PC-9 (cell line): ENCODE measurements at regions of chr12 and their contacts with region 1.

Region 1: GRCh38 chr12:22670762-22671161 is 45.8 kb downstream of the ETNK1 start:
- DNase-seq: no peak
- H3K4me3 ChIP-seq: no peak overlapping the region
- H3K27ac ChIP-seq: no peak overlapping the region
- H3K4me1 ChIP-seq: no peaks in the 10 kb centered on the region
- H3K27me3 ChIP-seq: no peaks in the 10 kb centered on the region
- CTCF ChIP-seq: peak; percentile 52

Region 2: GRCh38 chr12:22190969-22191368 is 479.8 kb before region 1 on chr12:
- CTCF ChIA-PET with region 1: no interaction called
- POLR2A ChIA-PET with region 1: interaction called, 10 read pairs
- intact Hi-C with region 1: no loop called
- DNase-seq: no peak
- H3K4me3 ChIP-seq: no peak overlapping the region
- H3K27ac ChIP-seq: no peak overlapping the region
- H3K4me1 ChIP-seq: no peaks in the 10 kb centered on the region
- H3K27me3 ChIP-seq: no peaks in the 10 kb centered on the region
- CTCF ChIP-seq: no peak

Region 3: GRCh38 chr12:22518067-22518719 is 152.6 kb before region 1 on chr12:
- CTCF ChIA-PET with region 1: no interaction called
- POLR2A ChIA-PET with region 1: no interaction called
- intact Hi-C with region 1: loop called (anchors 10 kb)
- DNase-seq: no peak
- H3K4me3 ChIP-seq: no peak overlapping the region
- H3K27ac ChIP-seq: no peak overlapping the region
- H3K4me1 ChIP-seq: no peaks in the 10 kb centered on the region
- H3K27me3 ChIP-seq: no peaks in the 10 kb centered on the region
- CTCF ChIP-seq: no peak

Region 4: GRCh38 chr12:22598141-22598762 is 72.5 kb before region 1 on chr12:
- CTCF ChIA-PET with region 1: no interaction called
- POLR2A ChIA-PET with region 1: no interaction called
- intact Hi-C with region 1: no loop called
- DNase-seq: no peak
- H3K4me3 ChIP-seq: no peak overlapping the region
- H3K27ac ChIP-seq: no peak overlapping the region
- H3K4me1 ChIP-seq: no peaks in the 10 kb centered on the region
- H3K27me3 ChIP-seq: no peaks in the 10 kb centered on the region
- CTCF ChIP-seq: no peak

Region 5: GRCh38 chr12:22828073-22828472 is 157.3 kb after region 1 on chr12:
- CTCF ChIA-PET with region 1: no interaction called
- POLR2A ChIA-PET with region 1: no interaction called
- intact Hi-C with region 1: no loop called
- DNase-seq: no peak
- H3K4me3 ChIP-seq: no peak overlapping the region
- H3K27ac ChIP-seq: no peak overlapping the region
- H3K4me1 ChIP-seq: no peaks in the 10 kb centered on the region
- H3K27me3 ChIP-seq: no peaks in the 10 kb centered on the region
- CTCF ChIP-seq: no peak